ENCODE measurements at regions of chr13 and their contacts with region 1.

Region 1: GRCh38 chr13:76799696-76800095 is 86.5 kb downstream of the KCTD12 start:
- DNase-seq: no peak
- ATAC-seq: no peak

Region 2: DNA sequence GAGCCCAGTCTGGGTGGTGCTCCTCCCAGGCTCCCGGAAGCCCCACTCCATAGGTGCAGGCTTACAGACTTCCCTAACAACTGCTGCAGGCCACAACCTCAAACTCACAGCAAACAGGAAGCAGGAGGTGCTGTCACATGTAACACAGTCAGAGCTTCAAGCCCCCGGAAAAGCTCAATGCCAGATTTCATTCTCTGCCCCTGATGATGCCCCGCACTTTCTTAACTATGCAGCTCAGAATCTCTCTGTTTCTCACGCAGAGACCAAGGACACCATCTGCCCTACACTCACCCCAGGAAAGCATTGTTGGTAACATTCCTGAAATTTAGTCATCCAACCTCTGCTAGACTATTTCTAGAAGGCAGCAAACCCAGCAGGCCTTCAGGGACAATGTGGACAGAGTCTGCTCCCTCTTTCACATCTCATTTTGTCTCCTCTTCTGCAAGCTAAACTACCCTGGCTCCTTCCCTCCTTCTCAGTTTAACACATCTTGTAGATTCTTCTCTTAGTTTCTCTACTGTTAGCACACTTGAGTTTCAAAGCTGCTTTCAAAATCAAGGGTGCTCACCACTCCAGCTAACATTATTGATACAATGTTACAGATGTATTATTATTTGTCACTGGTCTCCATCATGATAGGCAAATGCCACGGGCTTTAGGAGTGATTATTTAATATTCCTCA is 76.0 kb before region 1 on chr13:
- intact Hi-C with region 1: loop called (anchors 5 kb)
- DNase-seq: no peak
- ATAC-seq: peak; percentile 65

Region 3: GRCh38 chr13:76852986-76853385 is 53.3 kb after region 1 on chr13:
- intact Hi-C with region 1: no loop called
- DNase-seq: no peak
- ATAC-seq: no peak

Region 4: GRCh38 chr13:76965759-76966421 is 166.2 kb after region 1 on chr13:
- intact Hi-C with region 1: no loop called
- DNase-seq: peak; percentile 81
- ATAC-seq: peak; percentile 60

Measured in Right ventricle myocardium inferior (tissue), 1 donor.